Thyroid gland (tissue), 4 donors: ENCODE measurements at regions of chr21 and their contacts with region 1.

Region 1: GRCh38 chr21:41726945-41727783 is 39.7 kb downstream of the RIPK4 start:
- DNase-seq: peak; percentile 18 to 20
- H3K4me3 ChIP-seq: no peak overlapping the region
- H3K27ac ChIP-seq: no peak overlapping the region
- H3K4me1 ChIP-seq: no peaks in the 10 kb centered on the region
- H3K27me3 ChIP-seq: no peaks in the 10 kb centered on the region
- CTCF ChIP-seq: no peak
- POLR2A ChIP-seq: no peak

Region 2: GRCh38 chr21:41678944-41679343 is 48.2 kb before region 1 on chr21:
- intact Hi-C with region 1: loop called (anchors 10 kb)
- DNase-seq: peak; percentile 89 to 96
- H3K4me3 ChIP-seq: no peak overlapping the region
- H3K27ac ChIP-seq: peak overlapping the region; percentile 53 to 92 (median 88)
- H3K4me1 ChIP-seq: peaks cover 6 to 34% of the 10 kb centered on the region in 2 donors
- H3K27me3 ChIP-seq: no peaks in the 10 kb centered on the region
- CTCF ChIP-seq: no peak
- POLR2A ChIP-seq: peak in 1 of 2 donors; percentile 53

Region 3: DNA sequence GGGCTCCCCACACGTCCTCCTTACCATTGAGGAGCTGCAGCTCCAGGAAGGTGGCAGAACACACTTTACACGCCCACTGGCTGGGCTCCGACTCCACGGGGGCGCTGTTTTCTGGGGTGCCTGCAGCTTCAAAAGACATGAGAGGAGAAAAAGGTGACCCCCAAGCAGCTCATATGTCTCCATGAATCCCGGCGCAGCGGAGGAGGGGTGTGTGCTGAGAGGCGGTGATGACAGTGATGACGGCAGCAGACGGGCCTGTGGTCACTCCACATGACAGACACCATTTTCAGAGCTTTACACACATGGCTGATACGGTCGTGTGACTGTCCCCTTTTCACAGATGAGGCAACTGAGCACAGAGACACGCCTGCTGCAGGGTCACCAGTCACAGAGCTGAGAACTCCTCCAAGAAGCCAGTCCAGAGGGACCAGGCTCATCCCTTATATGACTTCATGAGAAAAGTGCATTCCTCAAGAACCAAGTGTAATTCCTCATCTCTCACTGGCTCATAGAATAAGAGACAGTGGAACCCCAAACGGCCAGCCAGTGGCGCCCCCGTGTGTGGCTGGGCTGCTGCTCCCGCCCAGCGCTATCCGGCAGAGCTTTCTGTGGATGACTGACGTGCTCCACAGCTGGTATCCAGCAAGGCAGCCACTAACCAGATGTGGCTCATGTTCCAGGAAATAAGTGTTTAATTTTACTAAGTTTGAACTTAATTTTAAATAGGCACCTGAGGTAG is 120.1 kb after region 1 on chr21:
- intact Hi-C with region 1: no loop called
- DNase-seq: no peak
- H3K4me3 ChIP-seq: no peak overlapping the region
- H3K27ac ChIP-seq: no peak overlapping the region
- H3K4me1 ChIP-seq: no peaks in the 10 kb centered on the region
- H3K27me3 ChIP-seq: no peaks in the 10 kb centered on the region
- CTCF ChIP-seq: no peak
- POLR2A ChIP-seq: no peak